ENCODE measurements at regions of chr12 and their contacts with region 1.

Region 1: DNA sequence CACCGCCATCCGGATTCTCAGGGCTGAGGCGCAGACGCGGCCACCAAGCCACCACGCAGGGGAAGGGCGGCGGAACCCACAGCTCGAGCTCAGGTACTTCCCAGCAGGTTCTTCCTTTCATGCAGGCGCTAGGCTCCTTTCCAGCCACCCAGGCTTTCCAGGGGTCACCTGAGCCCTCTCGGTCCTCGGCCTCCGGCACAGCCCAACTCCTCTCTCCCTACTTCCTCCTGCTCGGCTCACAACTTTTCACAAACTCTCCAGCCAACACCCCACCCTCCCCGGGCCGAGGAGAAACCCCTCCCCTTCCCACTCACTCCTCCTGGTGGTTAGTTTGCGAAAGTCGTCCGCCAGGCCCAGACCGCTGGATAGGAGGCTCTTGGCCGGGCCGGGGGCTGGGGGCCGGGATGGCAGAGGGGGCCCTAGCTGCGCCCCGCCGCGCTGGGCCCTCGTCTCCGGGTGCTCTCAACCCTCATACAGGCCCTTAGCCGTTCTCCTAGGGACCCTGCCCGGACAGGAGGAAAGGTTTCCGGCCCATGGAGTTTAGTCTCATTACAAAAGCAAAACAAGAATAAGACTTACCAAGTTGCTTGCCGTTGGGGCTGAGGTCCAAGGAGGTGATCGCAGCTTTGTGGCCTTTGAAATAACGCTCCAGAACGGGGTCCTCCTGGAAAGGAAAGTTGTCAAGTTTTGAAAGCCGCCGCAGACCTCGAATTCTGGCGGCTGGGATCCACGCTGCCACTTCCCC is at the start of gene GALNT4:
- DNase-seq: peak; percentile 61 to 91 (median 80)

Region 2: GRCh38 chr12:89019408-89020120 is 505.1 kb before region 1 on chr12:
- intact Hi-C with region 1: loop called (anchors 5 kb)
- DNase-seq: peak; percentile 47 to 93 (median 81)

Region 3: DNA sequence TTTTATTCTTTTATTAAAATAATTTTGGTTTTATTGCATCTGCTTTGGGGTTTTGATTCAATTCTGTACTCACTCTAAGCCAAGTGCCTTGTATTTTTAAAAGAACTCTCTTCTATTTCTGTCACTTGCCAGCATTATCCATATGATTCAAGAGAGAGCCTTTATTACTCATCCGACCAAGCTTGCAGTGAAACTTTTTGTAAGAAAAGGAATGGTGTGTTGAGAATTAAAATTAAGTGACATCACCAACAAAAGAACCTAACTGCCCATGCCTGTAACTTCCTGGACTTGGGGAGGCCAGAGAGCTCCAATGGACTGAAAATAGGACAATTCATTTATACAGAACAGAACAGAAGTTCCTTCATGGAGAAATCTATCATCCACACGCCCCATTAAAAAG is 52.2 kb before region 1 on chr12:
- intact Hi-C with region 1: loop called (anchors 2 kb)
- DNase-seq: peak in 2 of 42 donors; percentile 25 to 62

Measured in head of caudate nucleus (tissue), 42 donors.